ENCODE measurements at regions of chr12 and their contacts with region 1.

Region 1: GRCh38 chr12:109775172-109775881 is 57.9 kb downstream of the TRPV4 start:
- DNase-seq: no peak
- H3K4me3 ChIP-seq: no peak overlapping the region
- H3K27ac ChIP-seq: no peak overlapping the region
- H3K4me1 ChIP-seq: no peaks in the 10 kb centered on the region
- H3K27me3 ChIP-seq: no peaks in the 10 kb centered on the region
- CTCF ChIP-seq: peak; percentile 60 to 81 (median 70)

Region 2: DNA sequence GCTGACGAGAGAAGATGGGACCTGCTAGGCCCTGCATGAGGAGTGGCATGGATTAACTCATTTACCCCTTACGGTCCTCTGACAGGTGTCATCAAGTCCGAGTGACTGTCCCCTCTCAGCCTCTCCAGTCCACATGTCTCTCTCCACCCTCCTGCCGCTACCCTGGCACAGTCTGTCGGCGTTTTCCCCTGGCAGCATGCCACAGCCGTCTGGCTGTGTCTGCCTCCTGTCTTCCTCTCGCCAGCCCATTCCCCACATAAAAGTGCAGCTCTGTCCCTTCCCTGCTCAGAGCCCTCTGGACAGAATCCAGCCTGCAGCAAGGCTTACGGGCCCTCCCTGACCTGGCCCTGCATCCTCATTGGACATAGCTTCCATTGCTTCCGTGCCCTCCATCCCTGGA is 252.3 kb before region 1 on chr12:
- intact Hi-C with region 1: loop called (anchors 10 kb)
- DNase-seq: no peak
- H3K4me3 ChIP-seq: no peak overlapping the region
- H3K27ac ChIP-seq: no peak overlapping the region
- H3K4me1 ChIP-seq: no peaks in the 10 kb centered on the region
- H3K27me3 ChIP-seq: no peaks in the 10 kb centered on the region
- CTCF ChIP-seq: no peak

Region 3: DNA sequence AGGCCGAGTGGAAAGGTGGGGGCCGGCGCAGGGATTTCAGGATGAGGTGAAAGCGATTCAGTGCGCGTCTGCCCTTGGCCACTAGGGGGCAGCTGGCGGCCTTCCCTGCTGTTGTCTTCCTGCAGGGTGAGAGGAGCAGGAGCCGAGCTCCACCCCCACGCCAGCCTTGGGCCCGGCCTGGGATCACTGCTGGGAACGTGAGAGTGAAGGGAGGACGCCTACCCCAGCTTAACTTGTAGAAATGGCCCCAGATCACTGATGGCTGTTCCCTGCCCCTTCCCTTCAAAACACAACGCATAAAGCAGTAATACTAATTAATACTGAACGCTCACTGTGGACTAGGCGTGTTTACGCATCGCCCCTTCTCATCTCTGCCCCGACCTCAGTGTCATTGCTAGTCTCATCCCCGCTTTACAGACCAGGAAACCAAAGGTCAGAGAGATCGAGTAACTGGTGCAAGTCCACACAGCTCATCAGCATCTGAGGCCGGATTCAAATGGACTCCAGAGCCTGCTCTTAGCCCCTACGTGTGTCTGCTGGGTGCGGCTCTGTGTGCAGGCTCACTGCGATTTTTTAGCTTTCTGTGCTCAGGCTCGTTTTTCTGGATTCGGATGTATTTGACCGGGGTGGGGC is 177.4 kb before region 1 on chr12:
- intact Hi-C with region 1: loop called (anchors 1 kb)
- DNase-seq: peak; percentile 17 to 87
- H3K4me3 ChIP-seq: no peak overlapping the region
- H3K27ac ChIP-seq: no peak overlapping the region
- H3K4me1 ChIP-seq: peaks cover 0 to 4% of the 10 kb centered on the region in 2 donors
- H3K27me3 ChIP-seq: no peaks in the 10 kb centered on the region
- CTCF ChIP-seq: peak; percentile 89 to 91 (median 91)

Region 4: GRCh38 chr12:109695961-109696461 is 79.3 kb before region 1 on chr12:
- intact Hi-C with region 1: no loop called
- DNase-seq: no peak
- H3K4me3 ChIP-seq: no peak overlapping the region
- H3K27ac ChIP-seq: no peak overlapping the region
- H3K4me1 ChIP-seq: no peaks in the 10 kb centered on the region
- H3K27me3 ChIP-seq: no peaks in the 10 kb centered on the region
- CTCF ChIP-seq: no peak

Region 5: GRCh38 chr12:109951751-109952150 is 176.4 kb after region 1 on chr12:
- intact Hi-C with region 1: no loop called
- DNase-seq: no peak
- H3K4me3 ChIP-seq: no peak overlapping the region
- H3K27ac ChIP-seq: peak overlapping the region; percentile 77 to 78
- H3K4me1 ChIP-seq: peaks cover 13 to 32% of the 10 kb centered on the region in 2 donors
- H3K27me3 ChIP-seq: no peaks in the 10 kb centered on the region
- CTCF ChIP-seq: no peak